HCT116 (cell line): ENCODE measurements at regions of chr17 and their contacts with region 1.

Region 1: GRCh38 chr17:40026816-40027613 is 11.8 kb downstream of the CSF3 start:
- DNase-seq: peak; percentile 50
- ATAC-seq: peak; percentile 98
- H3K4me3 ChIP-seq: no peak overlapping the region
- H3K27ac ChIP-seq: peak overlapping the region; percentile 13; the same call in 1 of the 2 replicates
- H3K4me1 ChIP-seq: peaks cover 2 to 15% of the 10 kb centered on the region in 2 experiments; a peak in 2 of 4 replicates
- H3K27me3 ChIP-seq: no peaks in the 10 kb centered on the region
- CTCF ChIP-seq: peak; percentile 72 to 89 (median 87)
- POLR2A ChIP-seq: no peak
- RAD21 ChIP-seq: peak; percentile 73

Region 2: DNA sequence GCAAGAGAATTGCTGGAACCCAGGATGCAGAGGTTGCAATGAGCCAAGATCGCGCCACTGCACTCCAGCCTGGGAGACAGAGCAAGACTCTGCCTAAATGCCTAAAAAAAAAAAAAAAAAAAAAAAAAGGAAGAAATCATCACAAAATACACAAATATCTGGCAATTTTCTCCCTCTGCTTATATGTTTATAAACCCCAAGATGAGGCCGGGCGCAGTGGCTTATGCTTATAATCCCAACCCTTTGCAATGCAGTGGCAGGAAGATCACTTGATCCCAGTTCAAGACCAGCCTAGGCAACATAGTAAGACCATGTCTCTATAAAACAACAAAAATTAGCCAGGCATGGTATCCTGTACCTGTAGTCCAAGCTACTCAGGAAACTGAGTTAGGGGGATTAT is 597.4 kb before region 1 on chr17:
- CTCF ChIA-PET with region 1: no interaction called
- POLR2A ChIA-PET with region 1: no interaction called
- RAD21 ChIA-PET with region 1: no interaction called
- intact Hi-C with region 1: no loop called
- DNase-seq: no peak
- ATAC-seq: no peak
- H3K4me3 ChIP-seq: no peak overlapping the region
- H3K27ac ChIP-seq: no peak overlapping the region
- H3K4me1 ChIP-seq: no peaks in the 10 kb centered on the region
- H3K27me3 ChIP-seq: no peaks in the 10 kb centered on the region
- CTCF ChIP-seq: no peak
- POLR2A ChIP-seq: no peak
- RAD21 ChIP-seq: no peak

Region 3: GRCh38 chr17:39963829-39964228 is 63.2 kb before region 1 on chr17:
- CTCF ChIA-PET with region 1: no interaction called
- POLR2A ChIA-PET with region 1: no interaction called
- RAD21 ChIA-PET with region 1: no interaction called
- intact Hi-C with region 1: loop called (anchors 1 kb)
- DNase-seq: no peak
- ATAC-seq: no peak
- H3K4me3 ChIP-seq: no peak overlapping the region
- H3K27ac ChIP-seq: no peak overlapping the region
- H3K4me1 ChIP-seq: peaks cover 2 to 11% of the 10 kb centered on the region in 2 experiments; a peak in 2 of 4 replicates
- H3K27me3 ChIP-seq: peaks cover 5% of the 10 kb centered on the region; the same call in 1 of the 2 replicates
- CTCF ChIP-seq: no peak
- POLR2A ChIP-seq: no peak
- RAD21 ChIP-seq: no peak

Region 4: DNA sequence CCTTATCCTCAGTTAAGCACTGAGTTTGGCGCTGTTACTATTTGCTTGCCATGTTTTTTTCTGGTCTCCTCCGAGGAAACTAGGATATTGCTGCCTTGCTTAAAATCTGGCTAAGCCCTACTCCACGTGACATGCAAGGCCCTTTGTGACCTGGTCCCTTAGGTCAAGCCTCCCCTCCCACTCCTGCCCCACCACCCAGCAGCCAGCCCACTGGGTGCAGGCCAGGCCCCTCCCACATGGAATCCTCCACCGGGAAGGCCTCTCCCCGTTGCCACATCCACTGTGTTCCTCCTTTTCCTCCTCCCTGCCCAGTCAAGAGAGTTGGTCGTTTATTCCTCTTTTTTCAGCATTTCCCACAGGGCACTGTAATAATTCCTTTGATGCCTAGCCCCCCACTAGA is 30.2 kb before region 1 on chr17:
- CTCF ChIA-PET with region 1: no interaction called
- POLR2A ChIA-PET with region 1: no interaction called
- RAD21 ChIA-PET with region 1: no interaction called
- intact Hi-C with region 1: no loop called
- DNase-seq: no peak
- ATAC-seq: no peak
- H3K4me3 ChIP-seq: no peak overlapping the region
- H3K27ac ChIP-seq: no peak overlapping the region
- H3K4me1 ChIP-seq: no peaks in the 10 kb centered on the region
- H3K27me3 ChIP-seq: no peaks in the 10 kb centered on the region
- CTCF ChIP-seq: no peak
- POLR2A ChIP-seq: no peak
- RAD21 ChIP-seq: no peak

Region 5: DNA sequence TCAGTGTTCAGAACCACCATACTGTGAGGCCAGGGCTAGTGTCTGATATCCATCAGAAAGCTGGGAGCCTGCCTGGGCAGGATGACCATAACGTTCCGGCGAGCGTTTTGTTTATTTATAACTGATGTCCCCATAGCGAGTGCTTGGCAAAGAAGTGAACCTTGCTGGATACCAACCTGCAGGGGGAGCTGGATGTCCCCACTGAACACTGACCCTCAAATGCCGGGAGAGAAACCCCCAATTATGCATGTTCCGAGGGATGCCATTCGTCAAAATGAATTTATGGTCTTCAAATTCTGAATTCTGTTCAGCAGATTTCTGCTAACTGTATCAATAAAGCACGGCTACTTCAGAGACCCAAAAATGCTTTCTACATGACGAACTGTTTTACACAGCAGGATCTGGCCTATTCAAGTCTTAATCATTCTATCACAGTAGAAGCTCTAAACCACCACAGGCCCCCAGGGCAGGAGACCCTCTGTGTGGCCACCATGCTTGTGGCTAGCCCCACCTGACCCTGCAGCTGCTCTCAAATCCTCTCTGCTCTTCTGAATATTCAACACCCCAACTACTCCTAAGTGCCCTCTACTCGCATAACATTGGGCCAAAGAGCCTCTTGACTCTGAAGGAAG is 12.0 kb after region 1 on chr17:
- CTCF ChIA-PET with region 1: interaction called, 12 read pairs
- POLR2A ChIA-PET with region 1: no interaction called
- RAD21 ChIA-PET with region 1: no interaction called
- intact Hi-C with region 1: no loop called
- DNase-seq: peak; percentile 37
- ATAC-seq: peak; percentile 64
- H3K4me3 ChIP-seq: no peak overlapping the region
- H3K27ac ChIP-seq: no peak overlapping the region
- H3K4me1 ChIP-seq: peaks cover 3 to 8% of the 10 kb centered on the region in 2 experiments; a peak in 3 of 4 replicates
- H3K27me3 ChIP-seq: no peaks in the 10 kb centered on the region
- CTCF ChIP-seq: peak; percentile 36 to 81 (median 76); a peak in 5 of 6 replicates
- POLR2A ChIP-seq: no peak
- RAD21 ChIP-seq: peak; percentile 56